ENCODE measurements at regions of chr3 and their contacts with region 1.

Region 1: DNA sequence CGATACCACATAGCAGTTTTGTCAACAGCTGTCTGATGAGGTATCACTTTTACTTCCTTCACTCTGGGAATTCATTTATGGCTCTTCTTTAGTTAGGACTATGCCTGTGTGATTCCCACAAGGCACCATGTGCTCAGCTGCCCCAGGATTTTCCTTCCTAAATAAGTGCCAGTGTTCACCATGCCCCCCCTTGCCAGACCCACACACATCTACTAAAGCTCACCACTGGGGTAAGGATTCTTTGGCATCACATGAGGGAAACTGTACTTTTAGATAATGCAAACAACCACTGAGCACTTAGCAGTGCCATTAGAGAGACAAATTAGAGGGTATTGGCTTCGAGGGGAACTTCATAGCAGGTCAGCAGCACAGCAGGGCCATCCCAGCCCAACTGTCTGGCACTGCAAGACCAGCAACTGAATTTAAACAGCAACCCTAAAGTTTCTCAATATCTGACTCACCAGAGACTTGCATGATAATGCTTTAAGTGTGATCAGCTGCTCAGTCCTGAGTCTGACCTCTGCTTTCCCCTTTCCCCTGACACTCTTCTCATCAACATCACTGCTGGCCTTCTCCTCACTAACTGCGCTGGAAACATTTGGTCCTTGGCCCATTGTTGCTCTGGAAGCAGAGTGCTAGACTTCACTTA is 114.3 kb downstream of the STAC start:
- DNase-seq: no peak
- H3K4me3 ChIP-seq: no peak overlapping the region
- H3K27ac ChIP-seq: no peak overlapping the region
- H3K4me1 ChIP-seq: peaks cover 21% of the 10 kb centered on the region
- H3K27me3 ChIP-seq: no peaks in the 10 kb centered on the region
- CTCF ChIP-seq: no peak

Region 2: DNA sequence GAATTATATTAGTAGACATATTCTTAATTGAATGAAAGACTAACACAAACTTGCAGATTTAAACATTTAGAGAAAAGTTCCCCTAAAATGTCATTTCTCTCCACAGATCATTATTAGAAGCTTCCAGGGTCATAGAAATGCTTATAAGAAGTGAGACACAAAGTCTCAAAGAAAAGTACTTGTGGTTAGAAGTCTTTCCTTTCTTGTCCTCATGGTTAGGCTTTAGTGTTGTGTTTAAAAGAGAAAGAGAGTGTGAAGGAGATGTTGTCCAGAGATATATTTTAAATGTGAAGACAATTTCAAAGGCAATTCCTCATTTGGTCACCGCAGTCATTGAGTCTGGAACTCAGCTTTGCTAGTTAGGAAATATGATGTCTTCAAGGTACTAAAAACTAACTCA is 1085.7 kb before region 1 on chr3:
- CTCF ChIA-PET with region 1: no interaction called
- POLR2A ChIA-PET with region 1: interaction called, 13 read pairs
- intact Hi-C with region 1: no loop called
- DNase-seq: no peak
- H3K4me3 ChIP-seq: no peak overlapping the region
- H3K27ac ChIP-seq: no peak overlapping the region
- H3K4me1 ChIP-seq: no peaks in the 10 kb centered on the region
- H3K27me3 ChIP-seq: no peaks in the 10 kb centered on the region
- CTCF ChIP-seq: no peak

Region 3: GRCh38 chr3:36477655-36478054 is 16.9 kb before region 1 on chr3:
- CTCF ChIA-PET with region 1: no interaction called
- POLR2A ChIA-PET with region 1: interaction called, 19 read pairs
- intact Hi-C with region 1: no loop called
- DNase-seq: no peak
- H3K4me3 ChIP-seq: no peak overlapping the region
- H3K27ac ChIP-seq: no peak overlapping the region
- H3K4me1 ChIP-seq: 0 out of 2 replicates have a peak, but pooled peaks cover 9% of the 10 kb centered on the region
- H3K27me3 ChIP-seq: no peaks in the 10 kb centered on the region
- CTCF ChIP-seq: no peak

Measured in PC-9 (cell line).